ENCODE measurements at regions of chr16 and their contacts with region 1.

Region 1: DNA sequence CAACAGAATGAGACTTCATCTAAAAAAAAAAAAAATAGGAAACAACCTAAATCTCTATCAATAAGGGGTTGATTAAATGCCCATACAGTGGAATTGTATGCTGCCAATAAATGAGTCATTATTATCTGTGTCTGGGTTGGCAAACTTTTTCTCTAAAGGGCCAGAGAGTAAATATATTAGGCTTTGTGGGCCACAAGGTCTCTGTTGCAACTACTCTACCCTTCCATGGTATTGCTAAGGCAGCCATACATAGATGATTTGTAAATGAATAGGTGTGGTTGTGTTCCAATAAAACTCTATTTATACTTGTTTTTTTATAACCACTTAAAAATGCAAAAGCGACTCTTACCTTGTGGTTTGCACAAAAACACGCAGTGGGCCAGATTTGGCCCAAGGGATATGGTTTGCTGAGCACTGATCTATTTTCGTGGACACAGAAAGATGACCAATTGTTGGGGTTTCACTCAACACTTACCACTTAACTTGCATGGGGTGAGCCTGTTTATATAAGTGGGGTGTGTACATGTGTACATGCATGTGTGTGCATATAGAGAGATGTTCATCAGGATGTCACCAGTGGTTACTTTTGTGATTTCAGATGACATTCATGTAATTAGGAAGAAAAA is 12.4 kb upstream of the IL4R start:
- DNase-seq: no peak
- H3K4me3 Mint-ChIP-seq: no peak overlapping the region
- H3K27ac Mint-ChIP-seq: no peak overlapping the region
- H3K4me1 Mint-ChIP-seq: peaks cover 43% of the 10 kb centered on the region
- H3K27me3 Mint-ChIP-seq: no peaks in the 10 kb centered on the region

Region 2: DNA sequence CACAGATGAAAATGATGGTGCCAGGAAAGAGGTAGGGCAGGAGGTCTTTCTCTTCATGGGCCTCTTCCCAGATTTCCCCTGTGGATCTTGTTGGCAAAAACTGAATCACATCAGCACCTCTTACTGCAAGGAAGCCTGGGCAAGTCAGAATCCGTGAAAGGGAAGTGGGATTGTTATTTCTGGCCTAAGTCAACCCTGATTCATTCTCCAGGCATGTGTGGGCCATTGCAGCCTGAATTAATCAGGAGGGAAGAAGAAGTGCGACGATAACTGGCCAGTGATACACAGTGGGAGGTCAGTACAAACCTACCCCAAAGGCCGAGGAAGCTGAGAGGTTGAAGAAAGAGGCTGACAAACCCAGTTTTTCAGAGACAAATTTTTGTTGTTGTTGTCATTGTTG is 14.9 kb before region 1 on chr16:
- intact Hi-C with region 1: loop called (anchors 1 kb)
- DNase-seq: no peak
- H3K4me3 Mint-ChIP-seq: no peak overlapping the region
- H3K27ac Mint-ChIP-seq: peak overlapping the region; percentile 93
- H3K4me1 Mint-ChIP-seq: peaks cover 79% of the 10 kb centered on the region
- H3K27me3 Mint-ChIP-seq: no peaks in the 10 kb centered on the region

Measured in activated T-helper 2 cell treated with anti-CD3 and anti-CD28 coated beads, Interferon-gamma antibody, Interleukin-2, Interleukin-4, amounts not matched to agents 10 μg/mL and 5 μg/mL and 100 μg/mL, durations not matched to agents 14 hours and 24 hours and 36 hours (primary cell).